GM10248 (cell line): ENCODE measurements at regions of chr16 and their contacts with region 1.

Region 1: DNA sequence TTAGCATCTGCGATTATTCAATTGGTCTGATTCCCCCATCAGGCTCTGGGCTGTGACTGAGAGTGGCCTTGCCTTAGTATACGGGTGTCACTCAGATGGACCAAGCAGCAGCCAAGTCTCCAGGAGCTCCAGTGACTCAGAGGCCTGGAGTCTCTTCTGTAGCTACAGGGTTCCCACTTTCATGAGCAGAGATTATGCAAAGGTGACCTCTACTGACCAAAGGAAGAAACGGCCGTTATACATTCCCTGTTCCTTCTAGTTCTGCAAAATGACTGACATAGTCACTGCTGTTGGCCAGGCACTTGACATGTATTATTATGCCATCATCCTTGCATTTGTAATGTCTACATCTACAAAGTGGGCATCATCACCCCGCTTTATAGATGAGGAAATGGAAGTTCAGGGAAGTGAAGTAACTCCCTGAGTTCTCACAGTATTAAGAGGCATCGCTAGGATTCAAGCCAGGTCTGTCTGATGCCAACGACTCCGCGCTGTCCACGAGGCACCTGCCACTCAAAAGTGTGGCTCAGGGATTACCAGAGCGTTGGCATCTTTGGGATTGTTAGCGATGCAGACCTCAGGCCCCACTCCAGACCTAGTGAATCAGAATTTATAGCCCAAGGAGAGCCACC is 23.3 kb downstream of the SLC38A7 start:
- DNase-seq: peak; percentile 75
- CTCF ChIP-seq: peak; percentile 70

Region 2: GRCh38 chr16:58494981-58495520 is 166.3 kb before region 1 on chr16:
- CTCF ChIA-PET with region 1: interaction called, 13 read pairs
- POLR2A ChIA-PET with region 1: no interaction called
- DNase-seq: peak; percentile 89
- CTCF ChIP-seq: peak; percentile 43

Region 3: GRCh38 chr16:58511933-58512815 is 149.1 kb before region 1 on chr16:
- CTCF ChIA-PET with region 1: interaction called, 44 read pairs
- POLR2A ChIA-PET with region 1: no interaction called
- DNase-seq: peak; percentile 78
- CTCF ChIP-seq: peak; percentile 85

Region 4: DNA sequence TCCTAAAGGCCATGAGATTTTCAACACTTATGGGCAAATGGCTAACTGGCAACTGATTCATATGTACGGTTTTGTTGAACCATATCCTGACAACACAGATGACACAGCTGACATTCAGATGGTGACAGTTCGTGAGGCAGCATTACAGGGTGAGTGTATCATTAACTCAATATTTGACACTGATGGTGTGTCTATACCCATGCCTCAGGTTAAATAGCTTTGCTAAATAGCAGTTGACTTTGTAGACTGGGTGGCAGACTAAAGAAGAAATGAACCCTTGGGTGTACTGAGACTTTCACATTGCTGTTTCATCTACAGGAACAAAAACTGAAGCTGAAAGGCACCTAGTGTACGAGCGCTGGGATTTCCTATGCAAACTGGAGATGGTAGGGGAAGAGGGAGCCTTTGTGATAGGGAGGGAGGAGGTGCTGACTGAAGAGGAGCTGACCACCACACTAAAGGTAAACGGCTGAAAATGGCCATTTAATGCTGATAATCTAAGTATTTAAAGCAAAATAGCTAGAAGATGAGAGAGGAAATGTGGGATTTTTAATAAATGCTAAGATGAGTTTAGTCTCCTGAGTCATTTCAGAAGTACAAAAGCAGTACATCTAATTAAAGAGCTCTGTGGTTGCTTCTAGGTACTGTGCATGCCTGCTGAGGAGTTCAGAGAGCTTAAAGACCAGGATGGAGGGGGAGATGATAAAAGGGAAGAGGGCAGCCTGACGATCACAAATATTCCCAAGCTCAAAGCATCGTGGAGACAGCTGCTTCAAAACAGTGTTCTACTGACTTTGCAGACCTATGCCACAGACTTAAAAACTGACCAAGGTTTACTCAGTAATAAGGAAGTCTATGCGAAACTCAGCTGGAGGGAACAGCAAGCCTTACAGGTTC is 143.0 kb before region 1 on chr16:
- CTCF ChIA-PET with region 1: interaction called, 44 read pairs
- POLR2A ChIA-PET with region 1: no interaction called
- DNase-seq: no peak
- CTCF ChIP-seq: no peak

Region 5: DNA sequence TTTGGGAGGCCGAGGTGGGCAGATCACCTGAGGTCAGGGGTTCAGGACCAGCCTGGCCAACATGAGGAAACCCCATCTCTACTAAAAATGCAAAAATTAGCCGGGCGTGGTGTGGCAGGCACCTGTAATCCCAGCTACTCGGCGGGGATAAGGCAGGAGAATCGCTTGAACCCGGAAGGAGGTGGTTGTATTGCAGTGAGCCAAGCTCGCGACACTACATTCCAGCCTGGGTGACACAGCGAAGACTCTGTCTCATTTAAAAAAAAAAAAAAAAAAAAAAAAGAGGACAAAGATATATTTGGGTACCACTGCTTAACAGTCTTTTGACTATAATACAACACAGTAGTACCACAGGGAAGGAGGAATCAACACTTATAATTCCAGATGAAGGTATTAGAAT is 40.9 kb before region 1 on chr16:
- CTCF ChIA-PET with region 1: no interaction called
- POLR2A ChIA-PET with region 1: no interaction called
- DNase-seq: no peak
- CTCF ChIP-seq: no peak

Region 6: DNA sequence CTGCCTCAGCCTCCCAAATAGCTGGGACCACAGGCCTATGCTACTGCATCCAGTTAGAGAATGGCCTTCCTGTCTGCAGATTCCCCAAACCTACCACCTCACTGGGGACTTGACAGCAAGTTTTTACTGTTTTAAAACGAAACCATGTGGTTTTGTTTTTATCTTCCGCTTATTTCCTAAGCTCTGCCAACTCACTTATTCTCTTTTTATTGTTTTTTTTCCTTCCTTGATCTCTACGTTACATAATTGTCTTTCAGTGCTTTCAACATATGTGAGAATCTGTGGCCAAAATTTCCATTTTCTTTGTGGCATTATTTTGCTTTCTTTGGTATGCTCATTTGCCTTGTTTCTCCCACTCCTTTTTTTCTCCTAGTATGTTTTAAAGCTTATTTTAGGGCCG is 37.8 kb after region 1 on chr16:
- CTCF ChIA-PET with region 1: no interaction called
- POLR2A ChIA-PET with region 1: no interaction called
- DNase-seq: no peak
- CTCF ChIP-seq: no peak

Region 7: DNA sequence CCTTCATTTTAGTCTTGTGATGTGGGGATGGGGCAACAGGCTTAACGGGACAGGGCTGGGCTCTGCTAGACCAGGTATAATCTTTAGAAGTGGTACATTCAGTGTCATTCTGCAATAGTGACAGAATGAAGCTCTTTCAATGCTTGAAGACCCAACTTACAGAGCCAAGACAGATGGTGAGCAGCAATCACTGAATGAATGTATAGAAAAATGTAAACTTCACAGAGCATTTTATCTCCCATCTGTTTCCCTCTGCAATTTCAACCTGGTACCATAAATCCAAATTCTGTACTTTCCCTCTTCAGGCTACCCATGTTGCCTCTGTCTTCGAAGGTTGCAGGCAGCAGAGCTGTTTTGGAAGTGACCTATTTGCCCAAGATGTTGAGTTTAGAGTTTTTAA is 106.3 kb after region 1 on chr16:
- CTCF ChIA-PET with region 1: no interaction called
- POLR2A ChIA-PET with region 1: no interaction called
- DNase-seq: no peak
- CTCF ChIP-seq: no peak